Head of caudate nucleus (tissue), 42 donors: ENCODE measurements at regions of chr16 and their contacts with region 1.

Region 1: DNA sequence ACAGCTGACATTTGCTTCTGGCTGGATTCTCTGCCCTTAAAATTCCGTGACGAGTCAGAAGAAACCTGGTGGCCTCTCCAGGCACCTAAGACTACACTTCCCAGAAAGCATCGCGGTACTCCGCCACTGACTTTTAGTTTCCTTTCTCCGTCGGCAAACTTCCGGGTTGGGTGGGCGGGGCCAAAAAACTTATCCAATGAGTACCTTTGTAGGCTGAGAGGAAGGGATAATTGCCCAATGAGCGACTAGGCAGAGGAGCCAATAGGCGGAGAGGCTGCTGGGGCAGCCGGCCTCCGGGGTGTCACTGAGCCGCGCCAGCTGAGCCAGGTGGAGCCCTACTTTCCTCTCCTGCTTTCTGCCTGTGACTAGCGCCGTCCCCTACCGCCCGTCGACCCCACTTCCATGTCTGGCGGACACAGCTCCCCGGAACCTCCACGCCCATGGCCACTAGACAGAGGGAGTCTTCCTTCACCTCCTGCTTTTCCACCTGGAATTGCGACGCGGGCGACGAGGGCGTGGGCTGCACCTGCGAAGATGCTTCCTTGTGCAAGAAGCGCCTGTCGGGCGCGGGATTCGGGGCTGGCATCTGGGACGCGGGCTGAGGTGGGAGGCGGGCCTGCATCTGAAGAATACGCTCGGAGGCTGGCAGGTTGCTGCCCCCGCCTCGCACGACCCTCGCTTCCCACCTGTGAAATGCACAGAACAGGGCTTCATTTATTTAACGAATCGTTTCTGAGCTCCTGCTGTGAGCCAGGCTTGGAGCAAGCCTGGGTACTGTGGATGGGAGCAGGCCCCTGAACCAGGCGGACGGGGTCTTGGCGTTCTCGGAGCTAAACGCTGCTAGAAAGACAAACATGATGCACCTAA is 16.5 kb upstream of the ARHGAP17 start:
- DNase-seq: peak; percentile 84 to 97 (median 92)

Region 2: GRCh38 chr16:25106567-25107465 is 75.1 kb after region 1 on chr16:
- intact Hi-C with region 1: loop called (anchors 2 kb)
- DNase-seq: peak; percentile 88 to 99 (median 96)

Region 3: GRCh38 chr16:25171390-25171789 is 139.7 kb after region 1 on chr16:
- intact Hi-C with region 1: no loop called
- DNase-seq: no peak